HCT116 (cell line): ENCODE measurements at regions of chr2 and their contacts with region 1.

Region 1: DNA sequence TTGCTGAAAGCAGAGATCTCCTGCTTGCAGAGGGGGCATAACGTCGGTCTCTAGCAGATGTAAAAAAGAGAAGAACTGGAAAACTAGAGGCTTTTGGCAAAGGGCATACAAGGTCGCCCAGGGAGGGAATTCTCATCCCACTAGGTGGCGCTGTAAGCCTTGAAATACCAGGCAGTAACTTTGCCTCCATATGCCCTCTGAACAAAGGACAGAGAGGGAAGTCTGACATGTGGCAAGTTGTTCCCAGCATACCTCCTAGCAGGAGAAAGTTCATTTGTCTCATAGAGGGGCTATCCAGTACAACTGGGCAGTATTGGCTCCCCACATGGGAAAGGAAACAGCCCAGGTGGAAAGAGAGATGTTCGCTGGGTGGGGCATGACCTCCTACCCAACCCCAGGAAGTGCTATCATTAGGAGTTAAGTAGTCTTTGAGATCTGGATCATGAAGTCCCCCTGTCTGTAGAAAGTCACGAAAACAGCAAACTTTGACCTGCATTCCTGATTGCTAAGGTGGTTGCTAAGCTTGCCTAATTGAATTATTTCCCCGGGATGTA is 39.9 kb downstream of the STK17B start:
- DNase-seq: peak; percentile 66
- ATAC-seq: peak; percentile 97
- H3K4me3 ChIP-seq: no peak overlapping the region
- H3K27ac ChIP-seq: no peak overlapping the region
- H3K4me1 ChIP-seq: no peaks in the 10 kb centered on the region; a peak in 1 of 4 replicates
- H3K27me3 ChIP-seq: no peaks in the 10 kb centered on the region
- CTCF ChIP-seq: peak; percentile 64 to 85 (median 84)
- POLR2A ChIP-seq: no peak
- RAD21 ChIP-seq: peak; percentile 98

Region 2: GRCh38 chr2:196277002-196277401 is 145.5 kb after region 1 on chr2:
- CTCF ChIA-PET with region 1: interaction called, 7 read pairs
- POLR2A ChIA-PET with region 1: no interaction called
- RAD21 ChIA-PET with region 1: interaction called in 1 of 2 experiments, 4 read pairs
- intact Hi-C with region 1: loop called (anchors 1 kb)
- DNase-seq: no peak
- ATAC-seq: peak; percentile 70
- H3K4me3 ChIP-seq: no peak overlapping the region
- H3K27ac ChIP-seq: no peak overlapping the region
- H3K4me1 ChIP-seq: no peaks in the 10 kb centered on the region
- H3K27me3 ChIP-seq: no peaks in the 10 kb centered on the region
- CTCF ChIP-seq: peak; percentile 65 to 74 (median 66); a peak in 5 of 6 replicates
- POLR2A ChIP-seq: no peak
- RAD21 ChIP-seq: peak; percentile 81

Region 3: GRCh38 chr2:196291873-196292800 is 160.7 kb after region 1 on chr2:
- CTCF ChIA-PET with region 1: no interaction called
- POLR2A ChIA-PET with region 1: no interaction called
- RAD21 ChIA-PET with region 1: no interaction called
- intact Hi-C with region 1: loop called (anchors 5 kb)
- DNase-seq: peak; percentile 75
- ATAC-seq: peak; percentile 88
- H3K4me3 ChIP-seq: peak overlapping the region in 1 of 2 experiments; percentile 24; a peak in 2 of 4 replicates
- H3K27ac ChIP-seq: no peak overlapping the region
- H3K4me1 ChIP-seq: peaks cover 15 to 34% of the 10 kb centered on the region in 2 experiments; a peak in 3 of 4 replicates
- H3K27me3 ChIP-seq: no peaks in the 10 kb centered on the region
- CTCF ChIP-seq: no peak
- POLR2A ChIP-seq: no peak
- RAD21 ChIP-seq: no peak

Region 4: DNA sequence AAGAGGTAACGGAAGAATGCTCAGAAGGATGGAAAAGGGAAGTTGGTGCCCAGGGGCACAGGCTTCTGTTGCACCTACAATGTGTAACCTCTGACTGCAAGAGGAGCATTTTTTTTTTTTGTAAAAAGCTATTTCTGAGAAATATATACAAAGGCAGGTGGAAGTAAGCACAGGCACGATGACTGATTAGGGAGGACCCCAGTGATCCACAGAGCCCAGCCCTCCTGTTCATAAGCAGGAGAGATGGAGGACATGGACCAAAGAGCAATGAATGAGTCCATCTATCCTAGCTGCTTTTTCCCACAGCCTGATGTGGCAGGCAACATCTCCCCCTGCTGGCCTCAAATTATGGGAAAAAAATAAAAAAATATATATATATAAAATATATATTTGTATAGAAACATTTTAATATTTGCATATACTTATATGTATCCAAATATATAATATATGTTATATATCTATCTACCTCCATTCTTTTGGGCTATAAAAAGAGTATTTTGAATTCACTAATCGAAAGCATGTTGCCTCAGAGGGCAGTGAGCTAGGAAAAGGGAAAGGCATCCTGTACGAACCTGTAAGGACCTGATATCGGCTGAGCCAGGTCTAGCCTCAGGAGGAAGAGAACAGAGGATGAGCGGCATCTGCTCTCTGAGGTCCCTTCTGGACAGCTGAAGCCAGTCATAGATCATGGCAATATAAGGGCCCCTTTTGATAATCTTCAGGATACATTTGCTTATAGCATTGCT is 205.9 kb after region 1 on chr2:
- CTCF ChIA-PET with region 1: interaction called, 20 read pairs
- POLR2A ChIA-PET with region 1: no interaction called
- RAD21 ChIA-PET with region 1: interaction called in 1 of 2 experiments, 3 read pairs
- intact Hi-C with region 1: loop called (anchors 1 kb)
- DNase-seq: no peak
- ATAC-seq: 0 out of 2 replicates have a peak, but pooled peaks have one; percentile 42
- H3K4me3 ChIP-seq: no peak overlapping the region
- H3K27ac ChIP-seq: no peak overlapping the region
- H3K4me1 ChIP-seq: no peaks in the 10 kb centered on the region
- H3K27me3 ChIP-seq: no peaks in the 10 kb centered on the region
- CTCF ChIP-seq: peak; percentile 26 to 53 (median 46); a peak in 4 of 6 replicates
- POLR2A ChIP-seq: no peak
- RAD21 ChIP-seq: peak; percentile 65

Region 5: GRCh38 chr2:196453613-196454047 is 322.2 kb after region 1 on chr2:
- CTCF ChIA-PET with region 1: interaction called, 13 read pairs
- POLR2A ChIA-PET with region 1: no interaction called
- RAD21 ChIA-PET with region 1: no interaction called
- intact Hi-C with region 1: loop called (anchors 1 kb)
- DNase-seq: peak; percentile 60
- ATAC-seq: peak; percentile 97
- H3K4me3 ChIP-seq: no peak overlapping the region
- H3K27ac ChIP-seq: no peak overlapping the region
- H3K4me1 ChIP-seq: no peaks in the 10 kb centered on the region
- H3K27me3 ChIP-seq: no peaks in the 10 kb centered on the region
- CTCF ChIP-seq: peak; percentile 63 to 68 (median 67); a peak in 5 of 6 replicates
- POLR2A ChIP-seq: no peak
- RAD21 ChIP-seq: peak; percentile 84

Region 6: GRCh38 chr2:196758474-196759377 is 627.3 kb after region 1 on chr2:
- CTCF ChIA-PET with region 1: no interaction called
- POLR2A ChIA-PET with region 1: no interaction called
- RAD21 ChIA-PET with region 1: no interaction called
- intact Hi-C with region 1: loop called (anchors 2 kb)
- DNase-seq: no peak
- ATAC-seq: peak; percentile 54; the same call in 1 of the 2 replicates
- H3K4me3 ChIP-seq: no peak overlapping the region
- H3K27ac ChIP-seq: no peak overlapping the region
- H3K4me1 ChIP-seq: no peaks in the 10 kb centered on the region
- H3K27me3 ChIP-seq: no peaks in the 10 kb centered on the region
- CTCF ChIP-seq: peak in 2 of 3 experiments; percentile 38 to 52; a peak in 3 of 6 replicates
- POLR2A ChIP-seq: no peak
- RAD21 ChIP-seq: peak; percentile 61